ENCODE measurements at regions of chr13 and their contacts with region 1.

Region 1: GRCh38 chr13:27130979-27131623 is 40.5 kb downstream of the USP12 start:
- DNase-seq: peak; percentile 90
- H3K4me3 Mint-ChIP-seq: peak overlapping the region; percentile 38
- H3K27ac Mint-ChIP-seq: peak overlapping the region; percentile 35
- H3K4me1 Mint-ChIP-seq: peaks cover 27% of the 10 kb centered on the region
- H3K27me3 Mint-ChIP-seq: no peaks in the 10 kb centered on the region
- CTCF ChIP-seq: no peak

Region 2: GRCh38 chr13:27012482-27013197 is 118.5 kb before region 1 on chr13:
- CTCF ChIA-PET with region 1: no interaction called
- POLR2A ChIA-PET with region 1: interaction called, 11 read pairs
- intact Hi-C with region 1: no loop called
- DNase-seq: peak; percentile 89
- H3K4me3 Mint-ChIP-seq: peak overlapping the region; percentile 10
- H3K27ac Mint-ChIP-seq: peak overlapping the region; percentile 59
- H3K4me1 Mint-ChIP-seq: peaks cover 8% of the 10 kb centered on the region
- H3K27me3 Mint-ChIP-seq: no peaks in the 10 kb centered on the region
- CTCF ChIP-seq: no peak

Region 3: GRCh38 chr13:27043013-27043412 is 88.1 kb before region 1 on chr13:
- CTCF ChIA-PET with region 1: no interaction called
- POLR2A ChIA-PET with region 1: no interaction called
- intact Hi-C with region 1: no loop called
- DNase-seq: peak; percentile 82
- H3K4me3 Mint-ChIP-seq: no peak overlapping the region
- H3K27ac Mint-ChIP-seq: no peak overlapping the region
- H3K4me1 Mint-ChIP-seq: peaks cover 20% of the 10 kb centered on the region
- H3K27me3 Mint-ChIP-seq: no peaks in the 10 kb centered on the region
- CTCF ChIP-seq: no peak